Transverse colon (tissue), 4 donors: ENCODE measurements at regions of chr3 and their contacts with region 1.

Region 1: DNA sequence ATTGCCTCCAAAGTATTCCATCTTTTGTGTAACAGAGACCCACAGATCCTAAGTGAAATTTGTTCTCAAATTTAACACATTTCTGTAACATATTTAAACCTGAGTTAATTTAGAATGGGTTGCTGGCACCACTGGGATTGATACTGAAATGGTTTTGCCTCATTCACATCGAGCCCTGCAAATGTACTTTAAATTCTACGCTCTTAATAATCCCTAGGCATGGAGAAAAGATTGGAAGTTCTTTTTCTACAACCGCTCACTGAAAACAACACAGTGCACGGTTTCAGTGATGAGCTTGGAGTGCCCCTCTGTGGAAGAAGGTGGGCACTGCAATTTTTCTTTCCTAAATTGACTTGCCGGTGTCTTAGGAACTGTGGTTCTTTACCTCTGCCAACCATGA is 109.9 kb upstream of the ATP11B start:
- DNase-seq: peak; percentile 74
- H3K4me3 ChIP-seq: peak overlapping the region in 2 of 4 donors; percentile 56 to 58
- H3K27ac ChIP-seq: peak overlapping the region; percentile 70 to 79 (median 74)
- H3K4me1 ChIP-seq: peaks cover 0 to 39% (median 25%) of the 10 kb centered on the region in 4 donors
- H3K27me3 ChIP-seq: peaks cover 33% of the 10 kb centered on the region
- CTCF ChIP-seq: peak; percentile 78 to 90 (median 86)
- EP300 ChIP-seq: no peak
- POLR2A ChIP-seq: no peak

Region 2: GRCh38 chr3:181700168-181701087 is 983.0 kb before region 1 on chr3:
- in situ Hi-C with region 1: loop called (anchors 10 to 25 kb)
- intact Hi-C with region 1: no loop called
- DNase-seq: peak; percentile 64
- H3K4me3 ChIP-seq: peak overlapping the region in 1 of 4 donors; percentile 2
- H3K27ac ChIP-seq: no peak overlapping the region
- H3K4me1 ChIP-seq: peaks cover 9 to 22% (median 17%) of the 10 kb centered on the region in 4 donors
- H3K27me3 ChIP-seq: peaks cover 100% of the 10 kb centered on the region
- CTCF ChIP-seq: peak; percentile 58 to 92 (median 80)
- EP300 ChIP-seq: no peak
- POLR2A ChIP-seq: no peak

Region 3: DNA sequence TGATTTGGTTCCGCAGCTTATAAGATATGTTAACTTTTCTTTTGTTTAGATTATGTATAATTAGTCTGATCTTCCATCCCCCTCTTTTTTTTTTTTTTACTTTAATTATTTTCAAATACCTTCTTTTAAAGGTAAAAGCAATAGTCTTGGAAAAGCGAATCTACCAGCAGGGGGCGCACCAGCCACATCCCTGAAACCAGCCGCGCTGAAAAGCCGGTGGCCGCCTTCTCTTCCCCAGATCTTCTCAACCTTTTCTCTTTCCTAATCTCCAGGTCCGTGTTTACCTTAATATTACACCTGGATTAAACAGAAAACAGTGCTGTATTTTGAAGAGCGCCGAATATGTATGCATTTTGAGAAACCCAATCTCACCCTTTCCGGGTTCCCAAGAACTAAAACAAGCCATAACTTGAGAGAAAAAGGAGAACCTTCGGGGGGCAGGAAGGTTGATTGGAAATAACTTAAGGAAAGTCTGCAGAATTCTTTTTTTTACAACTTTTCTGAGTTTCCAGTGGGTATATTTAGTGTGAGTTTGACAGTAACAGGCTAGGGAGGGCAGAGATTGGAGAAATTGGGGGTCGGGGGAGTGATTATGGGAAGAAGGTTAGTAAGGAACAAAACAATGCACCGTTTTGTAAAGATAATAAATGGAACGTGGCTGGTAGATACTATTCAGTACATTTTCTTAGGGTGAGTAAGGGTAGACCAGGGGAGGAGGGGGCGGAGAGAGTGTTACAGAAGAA is 973.7 kb before region 1 on chr3:
- in situ Hi-C with region 1: loop called (anchors 10 to 25 kb)
- intact Hi-C with region 1: loop called (anchors 10 kb)
- DNase-seq: peak; percentile 77
- H3K4me3 ChIP-seq: no peak overlapping the region
- H3K27ac ChIP-seq: no peak overlapping the region
- H3K4me1 ChIP-seq: peaks cover 11 to 35% (median 22%) of the 10 kb centered on the region in 4 donors
- H3K27me3 ChIP-seq: peaks cover 100% of the 10 kb centered on the region
- CTCF ChIP-seq: peak; percentile 72 to 90 (median 78)
- EP300 ChIP-seq: no peak
- POLR2A ChIP-seq: no peak

Region 4: GRCh38 chr3:182792901-182793662 is 109.6 kb after region 1 on chr3 and contains the start of gene ATP11B:
- in situ Hi-C with region 1: no loop called
- intact Hi-C with region 1: no loop called
- DNase-seq: peak; percentile 85
- H3K4me3 ChIP-seq: peak within 1 kb of the TSS; percentile 89 to 96 (median 92)
- H3K27ac ChIP-seq: peak within 1 kb of the TSS; percentile 96 to 99 (median 98)
- H3K4me1 ChIP-seq: peaks cover 3 to 43% (median 21%) of the 10 kb centered on the region in 4 donors
- H3K27me3 ChIP-seq: no peaks in the 10 kb centered on the region
- CTCF ChIP-seq: no peak
- EP300 ChIP-seq: no peak
- POLR2A ChIP-seq: peak; percentile 86
- total RNA-seq, gene ATP11B: 117 to 219 (median 134) TPM

Region 5: DNA sequence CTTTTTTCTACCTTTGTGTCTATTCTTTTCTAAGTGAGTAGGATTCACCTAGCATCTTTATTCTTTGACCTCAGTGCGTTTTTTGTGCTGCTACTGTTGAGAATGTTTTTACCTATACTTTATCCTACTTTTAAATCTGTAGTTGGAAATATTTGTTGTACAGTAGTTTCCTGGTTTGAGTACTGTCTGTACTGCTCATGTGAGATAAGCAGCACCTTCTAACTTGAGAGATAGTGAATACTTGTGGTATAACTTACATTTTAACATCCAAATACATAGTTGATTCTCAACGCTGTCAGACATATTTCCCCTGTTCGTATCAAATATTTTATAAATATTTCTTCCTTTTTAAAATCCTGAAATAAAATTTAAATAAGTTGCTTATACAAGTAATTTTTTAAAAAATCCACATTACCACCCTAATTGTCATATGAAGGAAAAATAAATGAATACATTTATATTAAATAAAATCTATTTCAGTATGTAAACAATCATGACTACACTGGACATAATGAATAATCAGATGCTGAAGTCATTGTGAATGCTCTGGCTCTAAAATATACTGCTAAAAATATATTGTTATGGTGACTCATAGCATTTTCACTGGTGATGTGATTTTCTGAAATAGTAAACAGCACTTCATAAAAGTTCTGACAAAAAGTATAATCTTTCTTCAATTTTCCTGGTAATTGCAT is 127.3 kb after region 1 on chr3:
- in situ Hi-C with region 1: no loop called
- intact Hi-C with region 1: no loop called
- DNase-seq: no peak
- H3K4me3 ChIP-seq: no peak overlapping the region
- H3K27ac ChIP-seq: no peak overlapping the region
- H3K4me1 ChIP-seq: peaks cover 0 to 53% (median 21%) of the 10 kb centered on the region in 4 donors
- H3K27me3 ChIP-seq: no peaks in the 10 kb centered on the region
- CTCF ChIP-seq: no peak
- EP300 ChIP-seq: no peak
- POLR2A ChIP-seq: no peak

Region 6: GRCh38 chr3:183033746-183034145 is 350.3 kb after region 1 on chr3:
- in situ Hi-C with region 1: no loop called
- intact Hi-C with region 1: no loop called
- DNase-seq: no peak
- H3K4me3 ChIP-seq: no peak overlapping the region
- H3K27ac ChIP-seq: no peak overlapping the region
- H3K4me1 ChIP-seq: no peaks in the 10 kb centered on the region
- H3K27me3 ChIP-seq: no peaks in the 10 kb centered on the region
- CTCF ChIP-seq: no peak
- EP300 ChIP-seq: no peak
- POLR2A ChIP-seq: no peak

Region 7: DNA sequence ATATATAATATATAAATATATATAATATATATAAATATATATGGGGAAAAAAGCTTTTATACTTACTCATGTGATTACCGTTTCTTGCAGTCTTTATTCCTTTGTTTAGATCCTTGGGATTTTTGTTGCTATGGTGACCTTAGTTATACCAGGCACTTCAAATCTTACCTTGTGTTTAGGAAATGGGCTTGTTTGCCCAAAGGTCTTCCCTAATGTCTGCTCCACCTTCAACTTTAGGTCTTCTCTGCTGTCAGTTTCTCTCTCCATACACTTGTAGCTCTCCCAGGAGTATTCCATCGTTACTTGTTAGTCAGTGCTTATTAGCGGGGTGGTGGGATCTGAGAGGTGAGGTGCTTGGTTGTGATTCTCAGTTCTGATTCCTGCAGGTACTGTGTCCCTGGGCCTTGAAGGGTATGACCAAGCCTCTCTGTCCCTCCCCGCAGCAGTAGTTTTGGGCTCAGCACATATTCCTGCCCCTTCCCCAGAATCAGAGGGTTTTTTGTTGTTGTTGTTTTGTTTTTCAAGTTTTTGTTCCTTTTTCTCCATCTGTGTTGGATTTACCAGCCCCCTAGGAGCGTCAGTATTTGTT is 488.7 kb after region 1 on chr3:
- in situ Hi-C with region 1: no loop called
- intact Hi-C with region 1: no loop called
- DNase-seq: no peak
- H3K4me3 ChIP-seq: no peak overlapping the region
- H3K27ac ChIP-seq: no peak overlapping the region
- H3K4me1 ChIP-seq: no peaks in the 10 kb centered on the region
- H3K27me3 ChIP-seq: peaks cover 29% of the 10 kb centered on the region
- CTCF ChIP-seq: no peak
- EP300 ChIP-seq: no peak
- POLR2A ChIP-seq: no peak